GM12878 (cell line): ENCODE measurements at regions of chr21 and their contacts with region 1.

Region 1: DNA sequence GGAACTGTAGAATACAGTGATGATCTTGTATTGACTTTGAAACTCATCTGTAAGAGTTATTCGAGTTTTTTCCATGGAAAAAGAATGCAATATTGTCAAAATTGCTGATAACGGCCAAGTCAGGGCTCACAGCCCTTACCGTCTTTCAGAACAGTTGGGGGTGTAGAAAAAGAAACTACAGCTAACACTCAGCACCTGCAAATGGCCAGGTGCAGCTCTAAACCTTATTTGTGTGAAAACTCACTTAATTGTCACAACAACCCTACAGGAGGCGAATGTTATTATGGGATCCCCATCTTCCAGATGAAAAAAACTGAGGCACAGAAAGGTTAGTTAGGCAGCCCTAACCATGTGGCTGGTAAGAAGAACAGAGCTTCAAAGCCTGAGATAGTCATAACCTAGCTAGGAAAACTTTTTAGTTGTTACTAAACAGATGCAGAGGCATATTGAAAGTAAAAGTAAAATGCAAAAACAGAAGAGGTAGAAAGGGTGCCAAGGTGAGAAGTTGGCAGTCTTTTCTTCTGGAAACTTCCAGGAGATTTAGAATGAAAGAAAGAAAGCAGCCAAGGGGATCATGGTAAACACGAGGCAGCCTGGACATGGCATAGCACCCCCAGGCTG is 76.4 kb downstream of the DSCAM start:
- DNase-seq: no peak
- ATAC-seq: no peak
- H3K4me3 ChIP-seq: no peak overlapping the region
- H3K27ac ChIP-seq: no peak overlapping the region
- H3K4me1 ChIP-seq: no peaks in the 10 kb centered on the region
- H3K27me3 ChIP-seq: no peaks in the 10 kb centered on the region
- CTCF ChIP-seq: no peak
- EP300 ChIP-seq: no peak
- POLR2A ChIP-seq: no peak
- RAD21 ChIP-seq: no peak

Region 2: GRCh38 chr21:40792691-40793456 is 22.3 kb after region 1 on chr21:
- CTCF ChIA-PET with region 1: no interaction called
- POLR2A ChIA-PET with region 1: no interaction called
- RAD21 ChIA-PET with region 1: no interaction called
- SMC1A ChIA-PET with region 1: no interaction called
- in situ Hi-C with region 1: no loop called
- intact Hi-C with region 1: loop called (anchors 2 kb)
- DNase-seq: no peak
- ATAC-seq: no peak
- H3K4me3 ChIP-seq: no peak overlapping the region
- H3K27ac ChIP-seq: no peak overlapping the region
- H3K4me1 ChIP-seq: no peaks in the 10 kb centered on the region
- H3K27me3 ChIP-seq: no peaks in the 10 kb centered on the region
- CTCF ChIP-seq: no peak
- EP300 ChIP-seq: no peak
- POLR2A ChIP-seq: no peak
- RAD21 ChIP-seq: no peak